AG04449 (cell line): ENCODE measurements at regions of chr7 and their contacts with region 1.

Region 1: GRCh38 chr7:92447345-92448204 is at the start of gene GATAD1:
- DNase-seq: no peak
- H3K4me3 ChIP-seq: peak within 1 kb of the TSS; percentile 91
- CTCF ChIP-seq: peak; percentile 86

Region 2: GRCh38 chr7:92134271-92135051 is 313.1 kb before region 1 on chr7 and contains the start of gene CYP51A1:
- CTCF ChIA-PET with region 1: interaction called, 18 read pairs
- POLR2A ChIA-PET with region 1: interaction called, 4 read pairs
- DNase-seq: peak; percentile 63
- H3K4me3 ChIP-seq: peak within 1 kb of the TSS; percentile 89
- CTCF ChIP-seq: peak; percentile 27

Region 3: GRCh38 chr7:92245487-92246362 is 201.8 kb before region 1 on chr7 and contains the starts of genes ANKIB1 and KRIT1:
- CTCF ChIA-PET with region 1: interaction called, 22 read pairs
- POLR2A ChIA-PET with region 1: interaction called, 6 read pairs
- DNase-seq: no peak
- H3K4me3 ChIP-seq: peak within 1 kb of the TSS; percentile 82
- CTCF ChIP-seq: no peak

Region 4: GRCh38 chr7:92421676-92422435 is 25.7 kb before region 1 on chr7:
- CTCF ChIA-PET with region 1: interaction called, 121 read pairs
- POLR2A ChIA-PET with region 1: no interaction called
- DNase-seq: no peak
- H3K4me3 ChIP-seq: no peak overlapping the region
- CTCF ChIP-seq: no peak

Region 5: DNA sequence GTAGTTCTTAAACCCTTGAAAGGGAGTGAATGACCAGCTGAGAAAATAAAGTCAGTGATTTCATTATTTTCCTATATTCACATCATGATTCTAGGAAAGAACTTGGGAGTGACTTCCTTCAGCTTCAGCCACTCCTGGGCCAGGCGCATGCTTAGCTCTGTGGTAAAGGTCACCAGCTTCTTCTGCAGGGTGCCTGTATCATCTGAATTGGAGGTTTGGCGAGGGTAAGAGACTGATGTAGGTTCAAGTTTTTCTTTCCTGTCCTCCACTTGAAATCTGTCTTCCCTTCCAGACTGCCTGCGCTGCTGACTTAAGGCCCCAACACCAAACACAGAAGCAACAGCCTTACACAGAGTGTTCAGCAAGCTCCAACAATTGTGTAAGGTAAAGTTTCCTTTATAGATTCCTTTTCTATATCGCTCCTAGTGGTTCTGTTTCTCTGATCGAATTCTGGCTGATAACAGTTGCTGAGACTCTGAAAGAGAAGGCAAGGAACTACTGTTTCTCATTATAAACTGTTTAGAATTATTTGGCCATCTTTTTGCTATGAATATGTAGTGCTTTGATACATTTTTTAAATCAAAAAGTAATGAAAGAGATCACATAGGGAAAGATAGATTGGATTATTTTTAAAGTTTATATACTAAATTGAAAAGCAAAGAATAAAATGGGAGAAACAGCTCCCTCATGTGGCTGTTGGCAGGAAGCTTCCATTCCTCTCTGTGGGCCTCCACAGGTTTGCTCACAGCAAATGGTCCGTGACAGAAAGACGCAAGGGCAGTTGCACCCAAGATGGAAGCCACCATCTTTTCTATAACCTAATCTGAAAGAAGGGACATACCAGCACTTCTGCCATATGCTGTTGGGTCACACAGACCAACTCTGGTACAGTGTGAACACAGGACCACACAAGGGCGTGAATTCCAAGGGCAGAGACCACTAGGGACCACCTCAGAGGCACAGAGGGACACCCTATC is 13.7 kb after region 1 on chr7:
- CTCF ChIA-PET with region 1: interaction called, 25 read pairs
- POLR2A ChIA-PET with region 1: interaction called, 7 read pairs
- DNase-seq: no peak
- H3K4me3 ChIP-seq: no peak overlapping the region
- CTCF ChIP-seq: peak; percentile 65